Dendritic cell treated with granulocyte-macrophage colony-stimulating factor and Interleukin-4, amounts not matched to agents 40 ng/mL and 50 ng/mL, for 4 days (primary cell): ENCODE measurements at regions of chr13 and their contacts with region 1.

Region 1: GRCh38 chr13:99356158-99357091 is 49.2 kb upstream of the GPR183 start:
- H3K4me3 Mint-ChIP-seq: peak overlapping the region; percentile 70
- H3K27ac Mint-ChIP-seq: peak overlapping the region; percentile 94
- H3K4me1 Mint-ChIP-seq: peaks cover 59% of the 10 kb centered on the region
- H3K27me3 Mint-ChIP-seq: no peaks in the 10 kb centered on the region

Region 2: GRCh38 chr13:99322297-99323103 is 33.9 kb before region 1 on chr13:
- intact Hi-C with region 1: loop called (anchors 5 kb)
- H3K4me3 Mint-ChIP-seq: peak overlapping the region; percentile 47
- H3K27ac Mint-ChIP-seq: peak overlapping the region; percentile 88
- H3K4me1 Mint-ChIP-seq: peaks cover 80% of the 10 kb centered on the region
- H3K27me3 Mint-ChIP-seq: no peaks in the 10 kb centered on the region